Activated T-helper 1 cell treated with anti-CD3 and anti-CD28 coated beads, Interleukin-12 subunit alpha, Interleukin-12 subunit beta, Interleukin-2, Interleukin-4 antibody, amounts not matched to agents 30 ng/mL and 10 ng/mL and 1 ng/mL, durations not matched to agents 14 hours and 24 hours and 36 hours (primary cell): ENCODE measurements at regions of chr12 and their contacts with region 1.

Region 1: GRCh38 chr12:118055144-118055557 is 5.8 kb downstream of the WSB2 start:
- DNase-seq: peak; percentile 55
- H3K4me3 Mint-ChIP-seq: peak overlapping the region; percentile 60
- H3K27ac Mint-ChIP-seq: peak overlapping the region; percentile 50
- H3K4me1 Mint-ChIP-seq: peaks cover 61% of the 10 kb centered on the region
- H3K27me3 Mint-ChIP-seq: no peaks in the 10 kb centered on the region

Region 2: GRCh38 chr12:117279606-117280005 is 775.5 kb before region 1 on chr12:
- intact Hi-C with region 1: no loop called
- DNase-seq: no peak
- H3K4me3 Mint-ChIP-seq: no peak overlapping the region
- H3K27ac Mint-ChIP-seq: no peak overlapping the region
- H3K4me1 Mint-ChIP-seq: no peaks in the 10 kb centered on the region
- H3K27me3 Mint-ChIP-seq: peaks cover 2% of the 10 kb centered on the region

Region 3: DNA sequence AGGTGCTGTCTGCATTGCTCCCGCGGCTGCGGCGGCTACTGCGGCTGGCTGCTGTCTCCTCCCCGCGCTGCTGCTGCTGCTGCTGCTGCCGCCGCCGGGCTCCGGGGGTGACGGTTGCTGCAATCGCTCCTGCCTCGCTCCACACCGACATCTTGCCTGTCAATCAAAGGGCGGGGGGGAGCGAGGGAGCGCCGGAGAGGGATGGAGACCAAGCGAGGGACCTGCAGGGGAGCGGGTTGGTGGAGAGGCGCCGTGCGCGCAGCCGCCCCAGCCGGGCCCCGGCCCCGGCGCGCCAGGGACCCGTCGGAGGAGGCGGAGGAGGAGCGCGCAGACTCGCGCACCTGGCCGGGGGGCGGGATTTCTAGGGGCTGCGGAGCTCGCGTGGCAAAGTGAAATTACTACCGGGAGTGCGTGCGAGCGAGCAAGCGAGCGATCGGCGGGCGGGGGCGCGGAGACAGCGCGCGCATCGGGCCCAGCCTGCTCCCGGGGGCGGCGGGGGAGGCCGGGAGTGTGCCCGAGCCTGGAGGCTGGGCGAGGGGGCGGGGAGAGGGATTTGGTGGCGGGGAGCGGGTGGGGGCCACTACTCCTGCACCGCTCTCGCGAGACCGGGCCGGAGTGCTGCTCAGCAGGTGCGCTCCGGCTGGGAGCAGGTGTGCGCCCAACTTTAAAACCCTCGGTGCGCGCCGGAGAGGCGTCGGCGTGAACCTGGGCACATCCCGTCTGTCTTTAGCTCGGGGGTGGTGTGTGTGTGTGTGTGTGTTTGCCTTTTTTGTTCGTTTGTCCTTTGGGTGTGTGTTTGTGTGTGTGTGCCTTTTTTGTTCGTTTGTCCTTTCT is 86.1 kb before region 1 on chr12 and contains the start of gene KSR2:
- intact Hi-C with region 1: loop called (anchors 5 kb)
- DNase-seq: peak; percentile 15
- H3K4me3 Mint-ChIP-seq: peak within 1 kb of the TSS; percentile 80
- H3K27ac Mint-ChIP-seq: peak within 1 kb of the TSS; percentile 64
- H3K4me1 Mint-ChIP-seq: peaks cover 6% of the 10 kb centered on the region
- H3K27me3 Mint-ChIP-seq: peaks cover 46% of the 10 kb centered on the region
- total RNA-seq, gene KSR2: 0.02 and 0.08 TPM in 2 replicates

Region 4: DNA sequence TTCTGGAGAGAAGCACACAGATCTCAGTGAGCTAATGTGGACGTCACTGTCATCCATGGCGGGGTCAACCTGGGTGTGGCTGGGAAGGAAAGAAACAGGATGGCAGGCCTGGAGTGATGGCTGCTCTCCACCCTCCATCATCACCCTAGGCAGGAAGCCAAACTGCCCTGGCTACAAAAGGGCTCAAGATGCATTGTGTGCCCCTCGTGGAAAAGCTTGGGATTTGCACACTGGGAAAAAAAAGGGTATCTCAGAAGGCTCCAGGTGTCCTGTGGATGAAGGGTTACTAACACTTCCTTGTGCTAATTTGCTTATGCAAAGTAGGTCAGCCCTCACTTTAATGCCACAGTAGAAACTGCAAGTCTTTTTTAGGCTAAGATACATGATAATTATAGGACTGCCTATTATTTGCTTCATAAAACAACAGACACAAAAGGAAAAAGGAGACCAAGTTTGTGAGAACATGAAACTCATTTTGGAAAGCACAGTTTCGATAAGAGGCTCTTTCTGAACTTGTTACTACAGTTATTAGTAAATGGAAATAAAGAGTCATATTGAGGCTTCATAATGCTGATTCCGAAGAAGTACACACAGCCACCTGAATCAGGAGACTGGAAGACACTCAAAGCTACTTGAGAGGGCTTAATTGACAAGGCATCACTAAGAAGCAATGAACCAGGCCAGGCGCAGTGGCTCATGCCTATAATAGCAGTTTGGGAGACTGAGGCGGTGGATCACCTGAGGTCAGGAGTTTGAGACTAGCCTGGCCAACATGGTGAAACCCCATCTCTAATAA is 19.7 kb before region 1 on chr12:
- intact Hi-C with region 1: loop called (anchors 1 kb)
- DNase-seq: no peak
- H3K4me3 Mint-ChIP-seq: peak overlapping the region; percentile 57
- H3K27ac Mint-ChIP-seq: peak overlapping the region; percentile 99
- H3K4me1 Mint-ChIP-seq: peaks cover 46% of the 10 kb centered on the region
- H3K27me3 Mint-ChIP-seq: no peaks in the 10 kb centered on the region

Region 5: GRCh38 chr12:118044075-118044474 is 11.1 kb before region 1 on chr12:
- intact Hi-C with region 1: loop called (anchors 1 kb)
- DNase-seq: no peak
- H3K4me3 Mint-ChIP-seq: peak overlapping the region; percentile 72
- H3K27ac Mint-ChIP-seq: peak overlapping the region; percentile 95
- H3K4me1 Mint-ChIP-seq: peaks cover 47% of the 10 kb centered on the region
- H3K27me3 Mint-ChIP-seq: no peaks in the 10 kb centered on the region

Region 6: GRCh38 chr12:118098911-118099671 is 43.9 kb after region 1 on chr12:
- intact Hi-C with region 1: no loop called
- DNase-seq: no peak
- H3K4me3 Mint-ChIP-seq: no peak overlapping the region
- H3K27ac Mint-ChIP-seq: no peak overlapping the region
- H3K4me1 Mint-ChIP-seq: peaks cover 5% of the 10 kb centered on the region
- H3K27me3 Mint-ChIP-seq: peaks cover 25% of the 10 kb centered on the region